ENCODE measurements at regions of chr3 and their contacts with region 1.

Region 1: DNA sequence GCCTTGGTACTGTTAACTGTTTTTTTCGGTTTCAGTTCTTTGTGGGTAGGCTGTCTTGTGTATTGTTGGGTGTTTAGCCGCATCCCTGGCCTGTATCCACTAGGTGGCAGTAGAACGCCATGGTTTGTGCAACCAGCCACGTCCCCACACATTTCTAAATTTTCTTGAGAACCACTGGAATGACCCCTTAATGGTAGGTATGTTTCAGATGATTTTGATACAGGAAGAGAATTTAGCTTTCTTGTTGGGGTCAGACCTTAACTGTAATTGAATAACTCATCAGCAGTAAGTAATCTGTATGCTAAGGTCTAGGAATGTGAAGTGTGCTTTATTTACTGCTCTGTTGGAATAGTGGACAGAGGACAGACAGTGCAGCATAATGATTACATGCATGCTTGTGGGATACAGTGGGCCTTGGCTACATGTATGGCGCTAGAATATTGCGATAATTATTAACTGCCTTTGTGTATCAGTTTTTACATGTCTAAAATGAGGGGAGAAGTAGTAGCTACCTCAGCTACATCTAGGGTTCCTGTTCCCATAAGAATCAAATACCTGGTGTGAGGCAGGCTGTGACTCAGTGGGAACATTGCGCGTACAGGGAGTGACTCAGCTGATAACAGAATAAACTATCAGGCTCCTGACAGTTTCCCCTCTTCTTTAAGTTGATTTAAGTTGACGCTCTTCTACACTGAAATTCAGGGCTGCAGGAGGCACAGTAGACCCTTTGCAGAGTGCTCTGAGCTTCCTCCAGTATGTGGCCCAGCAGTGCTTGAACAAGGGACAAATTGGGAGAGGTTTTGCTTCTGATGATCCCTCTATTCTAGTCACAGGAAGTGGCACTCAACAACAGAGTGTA is 25.0 kb upstream of the GPR171 start:
- DNase-seq: peak; percentile 88
- H3K4me3 Mint-ChIP-seq: peak overlapping the region; percentile 2
- H3K27ac Mint-ChIP-seq: peak overlapping the region; percentile 79
- H3K4me1 Mint-ChIP-seq: peaks cover 59% of the 10 kb centered on the region
- H3K27me3 Mint-ChIP-seq: no peaks in the 10 kb centered on the region

Region 2: DNA sequence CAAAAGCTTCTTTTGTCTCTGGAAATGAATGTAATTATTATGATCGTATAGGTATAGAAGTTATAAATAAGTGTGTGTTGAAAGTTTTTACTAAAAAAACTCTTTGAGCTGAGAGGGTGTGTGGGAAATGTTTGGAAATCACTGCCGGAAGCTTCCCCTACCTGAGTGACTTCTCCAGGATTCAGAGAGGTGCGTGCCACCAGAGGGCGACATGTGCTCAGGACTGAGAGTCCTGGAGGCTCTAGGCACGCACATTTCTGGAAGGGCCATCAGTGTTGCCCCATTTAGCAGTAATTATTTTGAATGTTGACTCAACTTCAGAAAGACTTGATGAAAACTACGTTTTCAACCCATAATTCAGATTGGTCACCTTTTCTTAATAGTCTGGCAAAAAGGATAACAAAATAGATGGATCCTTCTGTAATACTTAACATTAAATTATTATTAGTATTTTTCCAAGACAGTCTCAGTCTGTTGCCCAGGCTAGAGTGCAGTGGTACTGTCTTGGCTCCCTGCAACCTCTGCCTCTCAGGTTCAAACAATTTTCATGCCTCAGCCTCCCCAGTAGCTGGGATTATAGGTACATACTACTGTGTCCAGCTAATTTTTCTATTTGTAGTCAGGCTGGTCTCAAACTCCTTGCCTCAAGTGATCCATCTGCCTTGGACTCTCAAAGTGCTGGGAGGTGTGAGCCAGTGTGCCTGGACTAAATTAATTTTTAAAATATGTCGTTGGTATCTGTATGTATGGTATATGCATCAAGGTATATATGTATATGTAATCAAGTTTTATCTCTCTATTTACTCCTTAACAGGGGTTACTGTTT is 59.6 kb before region 1 on chr3:
- CTCF ChIA-PET with region 1: interaction called, 15 read pairs
- POLR2A ChIA-PET with region 1: no interaction called
- DNase-seq: peak; percentile 85
- H3K4me3 Mint-ChIP-seq: no peak overlapping the region
- H3K27ac Mint-ChIP-seq: no peak overlapping the region
- H3K4me1 Mint-ChIP-seq: peaks cover 47% of the 10 kb centered on the region
- H3K27me3 Mint-ChIP-seq: no peaks in the 10 kb centered on the region

Region 3: DNA sequence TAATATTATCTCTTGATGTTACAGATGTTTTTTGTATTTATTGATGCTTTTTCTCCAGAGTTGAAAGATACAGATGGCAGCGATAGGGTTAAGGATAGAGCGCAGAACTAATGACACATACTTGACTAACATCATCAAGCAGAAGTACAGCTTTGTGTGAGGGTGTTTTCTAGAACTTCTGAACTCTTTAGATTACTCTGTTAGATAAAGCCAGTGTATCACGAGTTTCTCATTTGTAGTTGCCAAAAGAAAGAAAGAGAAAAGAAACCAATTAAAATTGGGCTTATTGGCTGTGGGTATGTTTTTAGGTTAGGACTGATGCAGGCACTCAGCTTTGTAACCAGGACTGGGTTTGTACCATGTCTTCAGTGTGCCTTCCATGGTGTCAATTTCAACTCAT is 18.4 kb before region 1 on chr3:
- CTCF ChIA-PET with region 1: interaction called, 24 read pairs
- POLR2A ChIA-PET with region 1: no interaction called
- DNase-seq: no peak
- H3K4me3 Mint-ChIP-seq: peak overlapping the region; percentile 30
- H3K27ac Mint-ChIP-seq: peak overlapping the region; percentile 87
- H3K4me1 Mint-ChIP-seq: peaks cover 69% of the 10 kb centered on the region
- H3K27me3 Mint-ChIP-seq: no peaks in the 10 kb centered on the region

Region 4: GRCh38 chr3:151276687-151277042 is 48.6 kb after region 1 on chr3:
- CTCF ChIA-PET with region 1: interaction called, 55 read pairs
- POLR2A ChIA-PET with region 1: no interaction called
- DNase-seq: peak; percentile 33
- H3K4me3 Mint-ChIP-seq: peak overlapping the region; percentile 26
- H3K27ac Mint-ChIP-seq: peak overlapping the region; percentile 74
- H3K4me1 Mint-ChIP-seq: peaks cover 51% of the 10 kb centered on the region
- H3K27me3 Mint-ChIP-seq: no peaks in the 10 kb centered on the region

Region 5: DNA sequence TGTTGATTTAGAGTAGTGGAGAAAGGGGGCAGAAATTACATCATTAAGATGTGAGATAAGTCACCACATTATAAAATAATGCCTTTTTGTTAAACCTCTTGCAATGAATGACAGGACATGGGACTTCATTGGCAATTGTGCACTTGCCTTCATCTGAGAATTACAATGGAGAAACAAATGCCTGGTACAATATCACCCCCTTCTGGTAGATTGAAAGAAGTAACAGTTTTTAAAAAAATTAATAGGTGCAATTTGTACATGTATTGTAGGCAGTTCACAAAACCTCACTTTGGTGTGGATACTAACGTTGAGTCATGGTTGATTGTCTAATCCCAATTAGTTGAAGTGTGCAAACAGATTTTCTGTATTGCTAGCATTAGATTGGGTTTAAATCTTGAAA is 54.9 kb after region 1 on chr3:
- CTCF ChIA-PET with region 1: interaction called, 55 read pairs
- POLR2A ChIA-PET with region 1: no interaction called
- DNase-seq: peak; percentile 36
- H3K4me3 Mint-ChIP-seq: no peak overlapping the region
- H3K27ac Mint-ChIP-seq: peak overlapping the region; percentile 60
- H3K4me1 Mint-ChIP-seq: peaks cover 46% of the 10 kb centered on the region
- H3K27me3 Mint-ChIP-seq: no peaks in the 10 kb centered on the region

Region 6: DNA sequence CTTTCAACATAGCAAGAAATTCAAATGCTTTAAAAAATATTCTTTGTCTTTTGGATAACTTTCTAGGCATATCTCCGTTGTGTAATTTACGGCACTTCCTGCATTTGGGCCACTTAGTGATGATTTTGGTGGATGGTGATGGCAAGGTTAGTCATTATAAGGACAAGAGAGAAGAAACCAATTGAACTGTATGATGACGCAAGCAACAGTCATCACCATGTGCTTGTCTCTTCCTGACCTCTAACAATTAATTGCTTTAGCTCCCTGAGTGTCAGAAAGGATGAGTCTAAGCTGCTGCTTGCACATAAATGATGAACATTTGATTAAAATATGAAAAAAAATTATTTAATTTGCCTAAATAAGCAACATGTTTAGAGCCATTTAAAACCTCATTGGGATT is 167.8 kb after region 1 on chr3:
- CTCF ChIA-PET with region 1: no interaction called
- POLR2A ChIA-PET with region 1: no interaction called
- DNase-seq: no peak
- H3K4me3 Mint-ChIP-seq: no peak overlapping the region
- H3K27ac Mint-ChIP-seq: no peak overlapping the region
- H3K4me1 Mint-ChIP-seq: no peaks in the 10 kb centered on the region
- H3K27me3 Mint-ChIP-seq: peaks cover 5% of the 10 kb centered on the region

Measured in activated CD4-positive, alpha-beta T cell treated with anti-CD3 and anti-CD28 coated beads, Interleukin-2, amount 10 ng/mL, durations not matched to agents 7 days and 5 days (primary cell).